Posterior vena cava (tissue), 2 donors: ENCODE measurements at regions of chr11 and their contacts with region 1.

Region 1: GRCh38 chr11:106271686-106272085 is 194.2 kb downstream of the AASDHPPT start:
- DNase-seq: no peak

Region 2: GRCh38 chr11:106249617-106250239 is 22.0 kb before region 1 on chr11:
- intact Hi-C with region 1: loop called in 1 of 2 experiments (anchors 1 kb)
- DNase-seq: no peak